Dorsolateral prefrontal cortex (tissue), 120 donors: ENCODE measurements at regions of chr2 and their contacts with region 1.

Region 1: DNA sequence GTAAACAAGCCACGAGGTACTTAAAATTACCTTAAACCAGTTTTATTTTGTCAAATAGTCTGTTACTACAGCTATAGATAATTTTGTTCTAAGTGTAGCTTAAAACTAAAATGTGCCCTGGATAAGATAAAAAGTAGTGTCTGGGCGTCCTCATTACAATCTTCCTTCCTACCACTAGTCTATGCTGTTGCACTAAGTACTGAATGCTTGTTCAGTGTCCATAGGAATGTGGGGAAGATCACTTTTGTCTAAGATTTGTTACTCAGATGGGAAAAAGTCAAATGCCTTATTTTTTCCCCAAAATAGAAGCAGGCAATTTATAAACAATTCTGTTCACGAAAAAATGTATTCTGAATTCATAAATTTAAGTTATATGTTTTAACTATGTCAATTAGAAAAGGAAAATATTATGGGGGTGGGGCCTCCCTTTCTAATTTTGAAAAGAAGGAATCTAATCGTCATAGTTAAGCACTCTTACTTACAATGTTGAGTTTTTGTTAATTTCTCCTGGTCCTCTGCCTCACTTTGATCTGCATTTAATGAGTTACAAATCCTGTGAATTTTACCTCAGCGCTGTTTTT is 140.4 kb upstream of the VRK2 start:
- DNase-seq: no peak
- H3K4me3 ChIP-seq: peak overlapping the region in 1 of 59 donors; percentile 6
- H3K27ac ChIP-seq: peak overlapping the region in 54 of 59 donors; percentile 20 to 96 (median 91)
- H3K27me3 ChIP-seq: no peaks in the 10 kb centered on the region
- CTCF ChIP-seq: peak; percentile 64 to 94 (median 83)

Region 2: DNA sequence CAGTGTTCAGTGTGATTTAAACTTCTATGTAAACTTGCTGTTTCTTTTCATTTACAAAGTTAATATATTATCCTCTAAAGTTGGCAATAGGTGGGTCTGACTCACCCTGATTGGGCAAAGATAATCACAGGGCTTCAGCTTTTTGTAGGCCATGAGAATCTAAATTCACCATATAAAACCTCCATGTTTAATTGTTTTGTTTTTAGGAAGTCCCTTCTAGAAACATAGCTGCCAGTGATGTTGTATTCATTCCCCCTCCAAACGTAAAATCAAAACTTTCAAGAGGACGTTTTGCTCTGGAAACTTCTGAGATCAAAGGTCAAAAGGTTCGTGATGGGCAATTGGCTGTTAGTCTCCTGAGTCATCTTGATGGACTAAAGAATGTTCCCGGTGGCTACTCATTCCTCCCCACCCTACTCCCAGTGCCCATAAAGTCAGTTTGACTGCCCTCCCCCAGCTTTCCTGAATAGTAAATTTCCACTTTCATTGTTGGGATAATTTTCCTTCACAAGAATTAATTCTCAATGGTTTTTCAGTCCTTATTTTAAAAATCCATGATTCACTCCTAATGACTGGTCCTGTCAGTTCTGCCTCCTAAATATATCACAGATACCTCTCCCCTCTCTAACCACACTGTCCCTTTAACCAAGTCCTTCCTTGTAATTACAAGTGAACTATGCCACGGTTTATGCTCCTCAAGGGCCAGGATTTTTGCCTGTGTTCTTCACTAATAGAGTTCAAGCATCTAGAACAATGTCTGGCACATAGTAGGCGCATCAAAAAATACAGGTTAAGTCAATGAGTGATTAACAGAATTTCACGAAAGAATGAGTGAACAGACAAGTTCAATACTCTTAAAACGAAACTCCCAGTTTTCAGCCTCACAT is 24.0 kb before region 1 on chr2:
- intact Hi-C with region 1: loop called in 1 of 2 experiments (anchors 1 kb)
- DNase-seq: no peak
- H3K4me3 ChIP-seq: peak overlapping the region in 57 of 59 donors; percentile 14 to 70 (median 45)
- H3K27ac ChIP-seq: peak overlapping the region in 55 of 59 donors; percentile 7 to 86 (median 66)
- H3K27me3 ChIP-seq: no peaks in the 10 kb centered on the region
- CTCF ChIP-seq: no peak

Region 3: GRCh38 chr2:58054264-58054663 is 148.0 kb after region 1 on chr2:
- intact Hi-C with region 1: loop called (anchors 5 to 10 kb)
- DNase-seq: no peak
- H3K4me3 ChIP-seq: no peak overlapping the region
- H3K27ac ChIP-seq: no peak overlapping the region
- H3K27me3 ChIP-seq: no peaks in the 10 kb centered on the region
- CTCF ChIP-seq: no peak

Region 4: DNA sequence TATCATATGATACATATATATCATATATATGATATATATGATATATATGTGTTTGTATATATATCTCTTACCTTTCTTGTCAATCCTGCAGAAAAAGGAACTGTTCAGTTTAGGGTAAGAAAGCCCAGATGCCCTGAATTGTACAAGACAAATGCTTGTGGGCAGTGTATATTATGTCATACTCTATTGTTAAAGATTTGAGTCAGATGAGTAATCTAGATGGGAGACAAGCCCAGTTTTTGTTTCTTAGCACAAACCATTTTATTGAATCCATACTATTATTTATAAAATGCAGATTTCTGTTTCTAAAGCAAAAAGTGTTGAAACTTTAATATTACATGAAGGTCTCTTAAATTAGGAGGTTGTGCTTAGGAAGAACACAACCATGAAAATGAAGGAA is 231.0 kb after region 1 on chr2:
- intact Hi-C with region 1: loop called (anchors 5 kb)
- DNase-seq: no peak
- H3K4me3 ChIP-seq: no peak overlapping the region
- H3K27ac ChIP-seq: peak overlapping the region in 56 of 59 donors; percentile 3 to 90 (median 75)
- H3K27me3 ChIP-seq: no peaks in the 10 kb centered on the region
- CTCF ChIP-seq: no peak

Region 5: GRCh38 chr2:58448065-58448507 is 541.8 kb after region 1 on chr2:
- intact Hi-C with region 1: loop called (anchors 1 to 5 kb)
- DNase-seq: peak; percentile 14 to 84 (median 71)
- H3K4me3 ChIP-seq: peak overlapping the region in 3 of 59 donors; percentile 4 to 31 (median 12)
- H3K27ac ChIP-seq: peak overlapping the region in 50 of 59 donors; percentile 5 to 81 (median 67)
- H3K27me3 ChIP-seq: no peaks in the 10 kb centered on the region
- CTCF ChIP-seq: peak; percentile 40 to 97 (median 74)

Region 6: GRCh38 chr2:58939388-58939787 is 1033.1 kb after region 1 on chr2:
- intact Hi-C with region 1: no loop called
- DNase-seq: no peak
- H3K4me3 ChIP-seq: no peak overlapping the region
- H3K27ac ChIP-seq: no peak overlapping the region
- H3K27me3 ChIP-seq: no peaks in the 10 kb centered on the region
- CTCF ChIP-seq: no peak